ENCODE measurements at regions of chr10 and their contacts with region 1.

Region 1: DNA sequence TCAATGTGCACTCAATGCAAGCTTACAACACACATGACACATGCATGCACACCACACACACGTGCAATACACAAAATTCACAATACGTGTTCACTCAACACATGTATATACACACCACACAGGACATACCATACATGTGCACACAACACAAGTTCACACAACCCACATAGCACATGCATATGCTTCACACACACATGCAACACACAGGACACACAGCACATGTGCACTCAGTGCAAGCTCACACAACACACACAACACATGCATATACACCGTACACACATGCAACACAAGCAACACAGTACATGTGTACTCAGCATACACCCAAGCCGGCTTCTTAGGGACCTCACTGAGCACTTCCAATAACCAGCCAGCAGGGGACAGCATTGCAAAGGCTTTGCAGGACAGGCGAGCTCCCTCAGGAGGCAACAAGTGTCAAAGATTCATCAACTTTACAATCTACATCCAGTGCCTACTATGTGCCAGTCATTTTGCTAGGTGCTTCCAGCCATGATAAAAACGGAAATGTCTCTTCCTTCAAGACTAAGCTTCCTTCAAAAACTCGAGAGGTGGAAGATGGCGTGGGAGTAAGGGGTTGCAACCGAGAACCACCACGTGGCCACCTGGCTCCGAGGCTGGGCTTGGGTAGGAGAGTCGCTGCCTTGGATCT is 61.1 kb downstream of the JCAD start:
- DNase-seq: peak; percentile 73
- H3K4me3 ChIP-seq: no peak overlapping the region
- H3K27ac ChIP-seq: no peak overlapping the region
- H3K4me1 ChIP-seq: peaks cover 36% of the 10 kb centered on the region
- H3K27me3 ChIP-seq: no peaks in the 10 kb centered on the region
- CTCF ChIP-seq: peak; percentile 99

Region 2: GRCh38 chr10:29646238-29646902 is 351.9 kb before region 1 on chr10:
- intact Hi-C with region 1: no loop called
- DNase-seq: no peak
- H3K4me3 ChIP-seq: peak overlapping the region; percentile 6
- H3K27ac ChIP-seq: peak overlapping the region; percentile 72
- H3K4me1 ChIP-seq: peaks cover 70% of the 10 kb centered on the region
- H3K27me3 ChIP-seq: no peaks in the 10 kb centered on the region
- CTCF ChIP-seq: no peak

Region 3: GRCh38 chr10:30241422-30242110 is 243.3 kb after region 1 on chr10:
- intact Hi-C with region 1: loop called (anchors 5 kb)
- DNase-seq: no peak
- H3K4me3 ChIP-seq: no peak overlapping the region
- H3K27ac ChIP-seq: no peak overlapping the region
- H3K4me1 ChIP-seq: peaks cover 9% of the 10 kb centered on the region
- H3K27me3 ChIP-seq: no peaks in the 10 kb centered on the region
- CTCF ChIP-seq: peak; percentile 6